ENCODE measurements at regions of chr7 and their contacts with region 1.

Region 1: GRCh38 chr7:2099048-2099957 is 133.4 kb downstream of the MAD1L1 start:
- DNase-seq: no peak
- H3K4me3 ChIP-seq: no peak overlapping the region
- H3K27ac ChIP-seq: no peak overlapping the region
- H3K4me1 ChIP-seq: peaks cover 4% of the 10 kb centered on the region
- H3K27me3 ChIP-seq: no peaks in the 10 kb centered on the region
- CTCF ChIP-seq: no peak

Region 2: GRCh38 chr7:2019607-2020511 is 79.4 kb before region 1 on chr7:
- CTCF ChIA-PET with region 1: no interaction called
- dilution Hi-C with region 1: loop called (anchors 10 kb)
- in situ Hi-C with region 1: no loop called
- intact Hi-C with region 1: no loop called
- DNase-seq: no peak
- H3K4me3 ChIP-seq: no peak overlapping the region
- H3K27ac ChIP-seq: no peak overlapping the region
- H3K4me1 ChIP-seq: peaks cover 13% of the 10 kb centered on the region
- H3K27me3 ChIP-seq: no peaks in the 10 kb centered on the region
- CTCF ChIP-seq: no peak